ENCODE measurements at regions of chr2 and their contacts with region 1.

Region 1: GRCh38 chr2:197378494-197379307 is 56.1 kb downstream of the SF3B1 start:
- DNase-seq: no peak

Region 2: GRCh38 chr2:196849895-196850294 is 528.8 kb before region 1 on chr2:
- intact Hi-C with region 1: loop called (anchors 10 kb)
- DNase-seq: no peak

Region 3: DNA sequence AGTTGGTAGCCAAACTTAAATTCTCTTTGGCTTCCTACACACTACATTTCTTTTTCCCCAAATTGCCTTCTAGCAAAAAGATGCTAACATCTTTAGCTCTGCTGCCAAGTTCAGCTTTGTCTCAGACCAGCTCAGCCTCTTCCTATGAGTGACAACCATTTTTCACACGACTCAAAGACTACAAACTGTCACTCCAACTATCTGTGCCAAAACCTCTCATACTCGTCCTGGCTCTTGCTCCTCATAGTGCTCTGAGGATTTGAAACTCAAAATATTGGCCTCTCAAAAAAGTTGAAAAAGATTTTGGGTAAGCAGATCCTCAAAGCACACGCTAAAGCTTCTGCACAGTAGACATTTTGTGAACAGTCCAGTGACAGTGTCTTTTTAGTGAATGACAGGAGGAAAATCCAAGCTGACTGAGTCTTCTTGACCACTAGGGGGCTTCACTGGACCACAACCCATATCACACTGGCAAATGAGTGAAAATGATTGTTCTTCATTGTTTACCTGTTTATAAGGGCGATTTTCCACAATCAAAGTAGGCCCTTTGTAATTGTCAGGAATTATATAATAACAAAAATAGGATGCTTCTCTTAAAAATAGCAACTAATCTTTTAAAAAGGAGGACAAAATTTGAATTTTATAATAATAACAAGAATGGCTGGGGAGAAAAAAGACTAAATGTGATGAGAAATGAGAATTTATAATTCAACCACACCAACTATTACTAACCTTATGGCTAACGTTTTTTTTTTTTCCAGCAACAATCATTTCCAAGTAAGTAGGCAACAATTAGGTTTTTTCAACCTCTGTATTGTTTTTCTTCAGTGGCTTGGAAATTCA is 366.7 kb before region 1 on chr2:
- intact Hi-C with region 1: loop called (anchors 2 kb)
- DNase-seq: no peak

Region 4: GRCh38 chr2:197191177-197191939 is 187.3 kb before region 1 on chr2:
- intact Hi-C with region 1: loop called (anchors 5 kb)
- DNase-seq: no peak

Region 5: GRCh38 chr2:197310271-197310985 is 68.3 kb before region 1 on chr2 and contains the start of gene ANKRD44:
- intact Hi-C with region 1: loop called (anchors 5 kb)
- DNase-seq: peak; percentile 95
- total RNA-seq, gene ANKRD44: 6.4 TPM

Measured in cardiac septum (tissue), 1 donor.